PC-9 (cell line): ENCODE measurements at regions of chr9 and their contacts with region 1.

Region 1: GRCh38 chr9:105127863-105128220 is 116.6 kb upstream of the SLC44A1 start:
- DNase-seq: peak; percentile 36 to 74
- H3K4me3 ChIP-seq: no peak overlapping the region
- H3K27ac ChIP-seq: peak overlapping the region; percentile 70
- H3K4me1 ChIP-seq: peaks cover 35% of the 10 kb centered on the region
- H3K27me3 ChIP-seq: no peaks in the 10 kb centered on the region
- CTCF ChIP-seq: no peak

Region 2: DNA sequence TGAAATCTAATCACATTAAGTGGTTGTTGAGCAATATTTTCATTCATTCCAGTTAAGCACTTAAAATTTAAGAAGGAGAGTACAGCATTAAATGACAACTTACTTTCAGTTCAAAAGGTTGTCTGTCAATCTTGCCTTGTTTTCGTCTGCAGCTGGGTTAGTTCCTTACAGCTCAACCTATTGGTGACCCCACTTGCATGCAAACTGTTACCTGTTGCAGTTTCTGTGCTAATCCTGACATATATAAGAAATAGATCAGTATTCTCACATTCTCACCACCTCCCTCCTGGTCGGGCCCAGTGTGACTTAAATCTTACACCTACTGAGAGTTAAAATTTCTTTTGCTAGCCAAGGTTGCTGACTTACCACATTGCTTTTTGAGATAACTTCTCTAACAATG is 1225.6 kb before region 1 on chr9:
- CTCF ChIA-PET with region 1: no interaction called
- POLR2A ChIA-PET with region 1: no interaction called
- intact Hi-C with region 1: no loop called
- DNase-seq: no peak
- H3K4me3 ChIP-seq: no peak overlapping the region
- H3K27ac ChIP-seq: no peak overlapping the region
- H3K4me1 ChIP-seq: no peaks in the 10 kb centered on the region
- H3K27me3 ChIP-seq: no peaks in the 10 kb centered on the region
- CTCF ChIP-seq: no peak

Region 3: GRCh38 chr9:104868687-104869404 is 259.0 kb before region 1 on chr9:
- CTCF ChIA-PET with region 1: interaction called, 6 read pairs
- POLR2A ChIA-PET with region 1: interaction called, 14 read pairs
- intact Hi-C with region 1: loop called (anchors 5 kb)
- DNase-seq: peak; percentile 72 to 85
- H3K4me3 ChIP-seq: peak overlapping the region; percentile 20; the same call in 1 of the 2 replicates
- H3K27ac ChIP-seq: peak overlapping the region; percentile 90
- H3K4me1 ChIP-seq: peaks cover 87% of the 10 kb centered on the region
- H3K27me3 ChIP-seq: no peaks in the 10 kb centered on the region
- CTCF ChIP-seq: no peak

Region 4: DNA sequence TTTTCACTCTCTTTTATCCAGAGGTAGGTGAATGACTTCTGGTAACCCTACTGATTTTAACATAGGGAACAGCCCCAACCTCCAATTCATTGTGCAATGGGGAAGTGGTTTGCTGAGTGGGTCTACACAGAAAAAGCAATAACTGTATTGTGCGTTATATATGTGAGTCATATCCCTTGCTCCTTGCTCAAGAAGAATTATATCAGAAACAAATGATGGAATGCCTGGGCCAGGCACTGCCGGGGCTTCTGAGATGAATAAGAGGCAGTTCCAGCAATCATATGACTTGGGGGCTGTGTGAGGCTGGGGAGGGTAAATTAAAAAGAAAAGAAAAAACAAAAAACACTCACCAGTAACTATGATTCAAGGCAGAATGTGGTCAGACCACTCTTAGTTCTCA is 120.7 kb before region 1 on chr9:
- CTCF ChIA-PET with region 1: no interaction called
- POLR2A ChIA-PET with region 1: no interaction called
- intact Hi-C with region 1: loop called (anchors 1 kb)
- DNase-seq: peak; percentile 39 to 94
- H3K4me3 ChIP-seq: peak overlapping the region; percentile 16; the same call in 1 of the 2 replicates
- H3K27ac ChIP-seq: peak overlapping the region; percentile 92
- H3K4me1 ChIP-seq: peaks cover 32% of the 10 kb centered on the region
- H3K27me3 ChIP-seq: no peaks in the 10 kb centered on the region
- CTCF ChIP-seq: no peak

Region 5: GRCh38 chr9:105064315-105065097 is 63.3 kb before region 1 on chr9:
- CTCF ChIA-PET with region 1: interaction called, 5 read pairs
- POLR2A ChIA-PET with region 1: no interaction called
- intact Hi-C with region 1: loop called (anchors 1 kb)
- DNase-seq: peak; percentile 93 to 94
- H3K4me3 ChIP-seq: peak overlapping the region; percentile 36; the same call in 1 of the 2 replicates
- H3K27ac ChIP-seq: peak overlapping the region; percentile 97
- H3K4me1 ChIP-seq: peaks cover 43% of the 10 kb centered on the region
- H3K27me3 ChIP-seq: no peaks in the 10 kb centered on the region
- CTCF ChIP-seq: no peak

Region 6: DNA sequence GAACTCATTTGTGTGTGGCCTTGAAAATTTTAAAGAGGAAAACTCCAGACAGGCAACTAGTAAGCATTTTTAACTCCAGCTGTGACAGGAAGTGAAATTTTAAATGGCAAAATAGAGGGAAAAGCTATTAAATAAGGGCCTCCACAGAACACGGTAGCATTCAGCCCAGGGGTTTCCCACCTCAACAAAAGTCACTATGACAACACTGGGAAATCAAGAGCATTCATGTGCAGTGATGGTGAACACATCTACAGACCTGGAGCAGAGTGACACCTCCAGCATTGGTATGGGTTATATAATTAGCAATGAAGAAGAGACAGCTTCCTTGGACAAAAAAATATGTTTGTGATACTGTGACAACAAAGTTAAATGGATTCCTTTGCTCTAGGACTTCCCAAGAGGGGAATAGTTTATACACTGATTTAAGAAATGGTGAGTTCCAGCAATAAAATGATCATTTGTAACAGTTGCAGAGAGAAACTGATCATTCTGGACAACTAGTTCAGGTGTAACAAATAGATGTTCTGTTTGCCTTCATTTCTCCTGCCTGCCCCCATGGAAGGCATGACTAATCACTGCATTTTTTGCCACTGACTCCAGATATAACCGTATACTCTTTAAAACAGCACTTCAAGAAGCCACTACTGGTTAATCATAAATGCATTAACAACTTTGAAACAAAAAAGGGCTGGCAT is 23.3 kb after region 1 on chr9:
- CTCF ChIA-PET with region 1: no interaction called
- POLR2A ChIA-PET with region 1: no interaction called
- intact Hi-C with region 1: loop called (anchors 1 kb)
- DNase-seq: peak; percentile 10 to 60
- H3K4me3 ChIP-seq: no peak overlapping the region
- H3K27ac ChIP-seq: peak overlapping the region; percentile 33
- H3K4me1 ChIP-seq: peaks cover 38% of the 10 kb centered on the region
- H3K27me3 ChIP-seq: no peaks in the 10 kb centered on the region
- CTCF ChIP-seq: no peak

Region 7: GRCh38 chr9:105157130-105157583 is 29.3 kb after region 1 on chr9:
- CTCF ChIA-PET with region 1: no interaction called
- POLR2A ChIA-PET with region 1: no interaction called
- intact Hi-C with region 1: loop called (anchors 1 kb)
- DNase-seq: peak; percentile 52 to 71
- H3K4me3 ChIP-seq: no peak overlapping the region
- H3K27ac ChIP-seq: no peak overlapping the region
- H3K4me1 ChIP-seq: peaks cover 24% of the 10 kb centered on the region
- H3K27me3 ChIP-seq: no peaks in the 10 kb centered on the region
- CTCF ChIP-seq: peak; percentile 71

Region 8: GRCh38 chr9:105187778-105188177 is 59.9 kb after region 1 on chr9:
- CTCF ChIA-PET with region 1: no interaction called
- POLR2A ChIA-PET with region 1: no interaction called
- intact Hi-C with region 1: loop called (anchors 10 kb)
- DNase-seq: peak; percentile 12 to 92
- H3K4me3 ChIP-seq: no peak overlapping the region
- H3K27ac ChIP-seq: peak overlapping the region; percentile 72
- H3K4me1 ChIP-seq: peaks cover 44% of the 10 kb centered on the region
- H3K27me3 ChIP-seq: no peaks in the 10 kb centered on the region
- CTCF ChIP-seq: no peak